Activated CD8-positive, alpha-beta memory T cell treated with anti-CD3 and anti-CD28 coated beads, Interleukin-2, amount 10 ng/mL, durations not matched to agents 7 days and 5 days (primary cell): ENCODE measurements at regions of chr12 and their contacts with region 1.

Region 1: DNA sequence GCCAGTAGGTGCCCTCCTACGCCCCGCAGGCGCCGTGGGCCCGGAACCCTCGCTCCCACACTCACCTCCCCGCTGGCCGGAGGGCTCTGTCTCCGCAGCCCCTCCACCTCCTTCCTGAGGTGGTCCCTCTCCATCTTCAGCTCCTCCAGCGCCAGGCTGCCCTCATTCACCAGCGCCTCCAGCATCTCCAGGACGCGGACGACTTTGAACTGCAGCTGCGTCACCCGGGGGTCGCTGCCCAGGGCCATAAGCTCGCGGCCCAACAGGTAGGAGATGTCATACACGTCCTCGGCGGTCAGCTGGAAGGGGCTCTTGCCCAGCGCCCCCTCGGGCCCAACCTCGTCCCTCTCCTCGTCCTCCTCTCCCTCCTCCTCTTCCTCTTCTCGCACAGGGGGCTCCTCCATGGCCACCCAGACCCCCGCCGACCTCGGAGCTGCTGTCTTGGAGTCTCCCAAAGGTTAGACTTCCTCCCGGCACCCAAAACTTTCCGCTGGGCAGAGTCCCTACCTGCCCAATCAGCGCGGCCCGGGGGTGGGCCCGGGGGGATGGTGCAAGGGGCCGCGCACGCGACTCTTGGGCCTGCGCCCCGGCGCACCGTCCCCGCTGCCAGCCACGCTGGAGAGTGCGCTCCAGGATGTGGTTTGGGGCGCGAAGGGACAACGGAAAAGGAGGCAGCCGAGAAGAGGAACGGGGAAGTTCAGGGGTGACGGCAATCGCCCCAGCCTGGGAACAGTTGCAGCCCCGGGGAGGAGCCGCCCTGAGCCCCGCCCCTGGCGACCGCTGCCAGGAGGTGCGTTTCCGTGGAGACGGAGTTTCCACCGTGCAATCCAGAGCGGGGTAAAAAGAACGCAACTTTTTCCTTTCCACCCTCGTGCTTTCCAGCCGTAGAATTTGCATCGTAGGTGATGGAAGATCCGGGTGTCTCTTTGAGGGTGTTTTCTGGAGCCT is at the start of gene RILPL2:
- DNase-seq: peak; percentile 93
- ATAC-seq: peak; percentile 82
- H3K4me3 Mint-ChIP-seq: peak within 1 kb of the TSS; percentile 89
- H3K27ac Mint-ChIP-seq: peak within 1 kb of the TSS; percentile 95
- H3K4me1 Mint-ChIP-seq: peaks cover 37% of the 10 kb centered on the region
- H3K27me3 Mint-ChIP-seq: no peaks in the 10 kb centered on the region
- total RNA-seq, gene RILPL2: 6.3 to 11.3 TPM

Region 2: GRCh38 chr12:123449249-123449733 is 13.0 kb after region 1 on chr12:
- CTCF ChIA-PET with region 1: interaction called, 15 read pairs
- DNase-seq: no peak
- ATAC-seq: no peak
- H3K4me3 Mint-ChIP-seq: peak overlapping the region; percentile 11
- H3K27ac Mint-ChIP-seq: peak overlapping the region; percentile 81
- H3K4me1 Mint-ChIP-seq: peaks cover 24% of the 10 kb centered on the region
- H3K27me3 Mint-ChIP-seq: no peaks in the 10 kb centered on the region

Region 3: DNA sequence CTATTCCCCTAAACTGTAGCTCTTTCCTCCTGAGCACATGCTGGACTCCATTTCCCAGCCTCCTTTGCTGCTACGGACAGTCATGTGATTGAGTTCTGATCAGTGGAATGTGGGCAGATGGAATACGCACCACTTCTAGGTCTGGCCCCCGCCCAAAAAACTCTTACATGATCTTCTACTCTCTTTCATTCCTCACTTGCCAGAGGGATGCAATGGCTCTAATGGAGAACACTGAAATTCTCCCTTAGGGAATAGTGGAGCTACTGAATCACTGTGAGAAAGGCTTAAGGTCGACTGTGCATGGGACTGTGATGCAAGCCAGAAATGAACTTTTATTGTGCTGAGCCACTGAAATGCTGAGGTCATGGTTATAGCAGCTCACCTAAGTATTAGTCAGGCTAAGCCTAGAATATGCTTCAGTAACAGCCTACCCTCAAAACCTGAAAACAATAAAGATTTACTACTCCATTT is 135.1 kb after region 1 on chr12:
- CTCF ChIA-PET with region 1: no interaction called
- DNase-seq: no peak
- ATAC-seq: no peak
- H3K4me3 Mint-ChIP-seq: no peak overlapping the region
- H3K27ac Mint-ChIP-seq: no peak overlapping the region
- H3K4me1 Mint-ChIP-seq: peaks cover 9% of the 10 kb centered on the region
- H3K27me3 Mint-ChIP-seq: peaks cover 21% of the 10 kb centered on the region

Region 4: GRCh38 chr12:123854918-123855317 is 418.6 kb after region 1 on chr12:
- CTCF ChIA-PET with region 1: no interaction called
- DNase-seq: no peak
- ATAC-seq: no peak
- H3K4me3 Mint-ChIP-seq: no peak overlapping the region
- H3K27ac Mint-ChIP-seq: no peak overlapping the region
- H3K4me1 Mint-ChIP-seq: no peaks in the 10 kb centered on the region
- H3K27me3 Mint-ChIP-seq: peaks cover 8% of the 10 kb centered on the region